ENCODE measurements at regions of chr1 and their contacts with region 1.

Region 1: GRCh38 chr1:164651351-164651951 is 92.5 kb downstream of the PBX1 start:
- DNase-seq: no peak
- ATAC-seq: peak; percentile 30

Region 2: DNA sequence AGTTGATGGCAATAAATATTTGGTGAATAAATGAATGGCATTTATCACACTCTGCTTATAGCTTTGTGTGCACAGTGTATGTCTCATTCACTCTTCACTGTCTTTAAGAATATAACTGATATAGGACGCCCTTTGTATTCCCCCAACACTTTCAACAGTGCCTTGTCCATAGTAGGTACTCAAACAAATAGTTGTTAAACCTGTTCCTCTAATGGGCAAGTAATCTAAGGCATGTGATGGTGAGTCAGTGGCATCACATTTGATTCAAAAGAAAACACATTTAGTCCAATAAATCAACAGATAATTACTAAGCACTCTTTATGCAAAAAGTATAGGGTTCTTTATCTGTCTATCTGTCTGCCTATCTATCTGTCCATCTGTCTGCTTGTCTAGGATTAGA is 804.7 kb after region 1 on chr1:
- intact Hi-C with region 1: loop called (anchors 5 kb)
- DNase-seq: no peak
- ATAC-seq: no peak